ENCODE measurements at regions of chr1 and their contacts with region 1.

Region 1: GRCh38 chr1:116504308-116505156 is 66.3 kb downstream of the CD58 start:
- DNase-seq: no peak
- ATAC-seq: peak; percentile 35
- H3K4me3 ChIP-seq: no peak overlapping the region
- H3K27ac ChIP-seq: peak overlapping the region; percentile 28
- H3K4me1 ChIP-seq: peaks cover 51 to 59% of the 10 kb centered on the region in 2 experiments
- H3K27me3 ChIP-seq: no peaks in the 10 kb centered on the region
- CTCF ChIP-seq: no peak
- POLR2A ChIP-seq: no peak
- RAD21 ChIP-seq: no peak

Region 2: GRCh38 chr1:116418091-116418830 is 86.3 kb before region 1 on chr1:
- CTCF ChIA-PET with region 1: no interaction called
- POLR2A ChIA-PET with region 1: no interaction called
- RAD21 ChIA-PET with region 1: no interaction called
- intact Hi-C with region 1: no loop called
- DNase-seq: peak; percentile 68
- ATAC-seq: peak; percentile 93
- H3K4me3 ChIP-seq: peak overlapping the region; percentile 88 to 89
- H3K27ac ChIP-seq: peak overlapping the region; percentile 38
- H3K4me1 ChIP-seq: peaks cover 8 to 28% of the 10 kb centered on the region in 2 experiments; a peak in 3 of 4 replicates
- H3K27me3 ChIP-seq: no peaks in the 10 kb centered on the region
- CTCF ChIP-seq: no peak
- POLR2A ChIP-seq: peak; percentile 9
- RAD21 ChIP-seq: no peak

Region 3: GRCh38 chr1:116556289-116557006 is 51.9 kb after region 1 on chr1:
- CTCF ChIA-PET with region 1: no interaction called
- POLR2A ChIA-PET with region 1: interaction called, 3 read pairs
- RAD21 ChIA-PET with region 1: no interaction called
- intact Hi-C with region 1: loop called (anchors 5 kb)
- DNase-seq: peak; percentile 92
- ATAC-seq: peak; percentile 96
- H3K4me3 ChIP-seq: peak overlapping the region in 1 of 2 experiments; percentile 23; a peak in 2 of 4 replicates
- H3K27ac ChIP-seq: peak overlapping the region; percentile 74
- H3K4me1 ChIP-seq: peaks cover 33 to 48% of the 10 kb centered on the region in 2 experiments
- H3K27me3 ChIP-seq: no peaks in the 10 kb centered on the region
- CTCF ChIP-seq: no peak
- POLR2A ChIP-seq: no peak
- RAD21 ChIP-seq: no peak

Region 4: DNA sequence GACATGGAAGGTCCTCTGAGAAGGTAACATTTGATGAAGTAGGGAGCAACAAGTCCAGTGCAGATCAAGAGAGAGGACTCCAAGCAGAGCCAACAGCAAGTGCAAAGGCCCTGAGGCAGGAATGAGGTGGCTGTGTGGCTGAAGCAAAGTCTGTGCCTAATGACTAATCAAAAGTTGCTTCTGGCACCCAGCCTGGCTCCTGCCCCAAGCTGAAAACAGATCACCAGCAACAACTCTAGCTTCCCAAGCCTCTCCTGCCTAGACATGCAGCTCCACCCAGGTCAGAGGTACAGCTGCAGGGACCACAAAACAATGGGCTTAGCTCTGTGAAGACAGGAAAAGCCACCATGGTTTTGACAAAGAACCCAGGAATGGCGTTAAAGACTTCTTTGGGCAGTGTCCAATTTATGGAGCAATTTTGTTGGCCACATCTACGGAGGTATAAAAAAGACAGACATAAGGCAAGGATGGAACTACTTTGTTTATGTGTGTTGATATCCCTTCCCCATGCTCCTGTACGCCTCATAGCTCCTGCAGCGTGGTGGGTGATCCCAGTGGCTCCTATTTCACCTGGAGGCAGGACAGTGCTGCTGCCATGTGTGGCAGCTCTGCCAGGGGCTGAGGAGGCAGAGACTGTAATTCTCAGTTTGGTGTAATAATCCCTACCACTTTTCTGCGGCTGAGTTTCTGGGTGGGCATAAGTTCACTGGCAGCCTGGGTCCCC is 189.4 kb after region 1 on chr1:
- CTCF ChIA-PET with region 1: no interaction called
- POLR2A ChIA-PET with region 1: no interaction called
- RAD21 ChIA-PET with region 1: no interaction called
- intact Hi-C with region 1: no loop called
- DNase-seq: no peak
- ATAC-seq: peak; percentile 67
- H3K4me3 ChIP-seq: no peak overlapping the region
- H3K27ac ChIP-seq: no peak overlapping the region
- H3K4me1 ChIP-seq: peaks cover 4 to 15% of the 10 kb centered on the region in 2 experiments; a peak in 3 of 4 replicates
- H3K27me3 ChIP-seq: no peaks in the 10 kb centered on the region; the same call in 1 of the 2 replicates
- CTCF ChIP-seq: no peak
- POLR2A ChIP-seq: no peak
- RAD21 ChIP-seq: no peak

Region 5: DNA sequence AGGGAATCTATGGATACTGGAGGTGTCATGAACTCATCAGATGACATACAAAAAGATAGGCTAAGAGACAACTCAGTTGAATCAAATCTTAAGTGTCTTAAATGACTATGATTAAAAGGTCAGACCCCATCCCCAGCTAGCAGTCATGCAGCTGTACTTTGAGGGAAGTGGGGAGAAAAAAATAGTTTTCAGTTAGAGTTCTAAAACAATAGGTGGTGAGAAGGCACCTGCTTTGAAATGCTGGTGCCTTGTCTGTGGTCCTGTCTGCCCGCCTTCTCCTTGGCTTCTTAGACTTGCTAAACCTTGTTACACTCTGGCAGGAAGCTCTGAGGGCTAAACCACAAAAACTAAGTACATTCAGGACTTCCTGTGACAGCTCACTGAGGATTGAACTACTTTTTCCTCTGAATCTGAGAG is 265.0 kb after region 1 on chr1:
- CTCF ChIA-PET with region 1: no interaction called
- POLR2A ChIA-PET with region 1: no interaction called
- RAD21 ChIA-PET with region 1: no interaction called
- intact Hi-C with region 1: no loop called
- DNase-seq: no peak
- ATAC-seq: no peak
- H3K4me3 ChIP-seq: no peak overlapping the region
- H3K27ac ChIP-seq: no peak overlapping the region
- H3K4me1 ChIP-seq: no peaks in the 10 kb centered on the region
- H3K27me3 ChIP-seq: no peaks in the 10 kb centered on the region
- CTCF ChIP-seq: no peak
- POLR2A ChIP-seq: no peak
- RAD21 ChIP-seq: no peak